ENCODE measurements at regions of chr6 and their contacts with region 1.

Region 1: DNA sequence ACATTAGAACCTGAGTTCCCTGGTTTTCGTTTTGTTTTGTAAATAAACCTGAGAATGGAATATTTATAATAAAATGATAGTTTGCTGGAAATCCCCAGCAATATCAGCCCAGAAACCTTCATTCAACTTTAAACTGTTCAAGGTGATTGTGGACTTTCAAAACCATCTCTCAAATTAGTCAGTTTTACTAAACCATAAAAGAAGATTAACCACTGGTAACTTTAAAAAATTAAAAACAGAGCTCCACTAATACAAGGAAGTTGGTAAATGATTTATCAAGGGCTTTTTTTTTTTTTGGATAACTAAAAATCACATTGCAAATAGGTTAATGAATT is 10.0 kb downstream of the MBOAT1 start:
- DNase-seq: no peak
- ATAC-seq: no peak
- H3K4me3 Mint-ChIP-seq: no peak overlapping the region
- H3K27ac Mint-ChIP-seq: peak overlapping the region; percentile 91
- H3K4me1 Mint-ChIP-seq: peaks cover 74% of the 10 kb centered on the region
- H3K27me3 Mint-ChIP-seq: no peaks in the 10 kb centered on the region

Region 2: DNA sequence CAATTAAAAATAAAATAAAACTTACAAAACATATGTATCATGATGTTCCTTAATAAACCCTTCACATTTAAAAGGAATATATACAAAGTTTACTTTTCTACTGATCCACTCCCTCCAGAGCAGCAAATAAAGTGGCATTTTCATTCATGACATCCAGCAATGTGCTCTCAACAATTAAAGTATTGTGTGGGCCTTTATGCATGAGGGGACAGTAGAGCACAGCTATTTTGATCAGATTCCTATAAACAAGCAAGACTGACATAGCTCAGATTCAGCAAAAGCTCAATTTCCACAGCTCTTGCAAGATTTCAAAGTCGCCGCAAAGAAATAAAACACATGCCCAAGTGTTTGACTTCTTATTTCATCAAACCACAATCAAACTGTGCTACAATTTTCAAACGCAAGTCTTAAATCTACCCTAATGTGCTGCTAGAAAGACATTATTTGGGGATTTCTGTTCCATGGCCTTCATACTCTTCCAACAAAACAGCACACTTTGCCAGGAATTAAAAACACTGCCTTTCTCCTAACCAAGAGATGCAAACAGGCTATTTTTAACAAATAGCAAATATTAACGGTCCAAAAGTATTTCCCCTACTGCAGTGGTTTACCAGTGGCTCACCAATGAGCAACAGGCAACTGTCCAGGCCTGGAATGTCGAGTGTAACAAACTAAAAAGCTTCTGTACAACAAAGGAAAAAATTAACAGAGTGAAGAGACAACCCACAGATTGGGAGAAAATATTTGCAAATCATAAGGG is 42.3 kb before region 1 on chr6:
- CTCF ChIA-PET with region 1: no interaction called
- DNase-seq: no peak
- ATAC-seq: no peak
- H3K4me3 Mint-ChIP-seq: no peak overlapping the region
- H3K27ac Mint-ChIP-seq: no peak overlapping the region
- H3K4me1 Mint-ChIP-seq: no peaks in the 10 kb centered on the region
- H3K27me3 Mint-ChIP-seq: no peaks in the 10 kb centered on the region

Region 3: GRCh38 chr6:20212392-20213217 is 10.3 kb after region 1 on chr6 and contains the start of gene MBOAT1:
- CTCF ChIA-PET with region 1: interaction called, 13 read pairs
- DNase-seq: peak; percentile 85
- ATAC-seq: peak; percentile 90
- H3K4me3 Mint-ChIP-seq: peak within 1 kb of the TSS; percentile 89
- H3K27ac Mint-ChIP-seq: peak within 1 kb of the TSS; percentile 99
- H3K4me1 Mint-ChIP-seq: peaks cover 49% of the 10 kb centered on the region
- H3K27me3 Mint-ChIP-seq: no peaks in the 10 kb centered on the region
- total RNA-seq, gene MBOAT1: 17.7 to 22.6 TPM

Region 4: GRCh38 chr6:20238688-20239587 is 36.6 kb after region 1 on chr6:
- CTCF ChIA-PET with region 1: no interaction called
- DNase-seq: no peak
- ATAC-seq: no peak
- H3K4me3 Mint-ChIP-seq: no peak overlapping the region
- H3K27ac Mint-ChIP-seq: no peak overlapping the region
- H3K4me1 Mint-ChIP-seq: peaks cover 2% of the 10 kb centered on the region
- H3K27me3 Mint-ChIP-seq: peaks cover 4% of the 10 kb centered on the region

Measured in activated CD8-positive, alpha-beta memory T cell treated with anti-CD3 and anti-CD28 coated beads, Interleukin-2, amount 10 ng/mL, durations not matched to agents 7 days and 5 days (primary cell).